ENCODE measurements at regions of chr22 and their contacts with region 1.

Region 1: GRCh38 chr22:32474635-32475467 is at the start of gene FBXO7:
- DNase-seq: peak; percentile 96
- H3K4me3 ChIP-seq: peak within 1 kb of the TSS; percentile 66 to 99 (median 94)
- H3K27ac ChIP-seq: peak within 1 kb of the TSS; percentile 88 to 100 (median 100)
- H3K4me1 ChIP-seq: peaks cover 0 to 41% (median 27%) of the 10 kb centered on the region in 4 donors
- H3K27me3 ChIP-seq: no peaks in the 10 kb centered on the region
- CTCF ChIP-seq: peak in 1 of 4 experiments; percentile 16
- EP300 ChIP-seq: peak in 1 of 4 donors; percentile 44
- POLR2A ChIP-seq: peak; percentile 48 to 72
- total RNA-seq, gene FBXO7: 69.0 to 83.6 (median 81.9) TPM

Region 2: DNA sequence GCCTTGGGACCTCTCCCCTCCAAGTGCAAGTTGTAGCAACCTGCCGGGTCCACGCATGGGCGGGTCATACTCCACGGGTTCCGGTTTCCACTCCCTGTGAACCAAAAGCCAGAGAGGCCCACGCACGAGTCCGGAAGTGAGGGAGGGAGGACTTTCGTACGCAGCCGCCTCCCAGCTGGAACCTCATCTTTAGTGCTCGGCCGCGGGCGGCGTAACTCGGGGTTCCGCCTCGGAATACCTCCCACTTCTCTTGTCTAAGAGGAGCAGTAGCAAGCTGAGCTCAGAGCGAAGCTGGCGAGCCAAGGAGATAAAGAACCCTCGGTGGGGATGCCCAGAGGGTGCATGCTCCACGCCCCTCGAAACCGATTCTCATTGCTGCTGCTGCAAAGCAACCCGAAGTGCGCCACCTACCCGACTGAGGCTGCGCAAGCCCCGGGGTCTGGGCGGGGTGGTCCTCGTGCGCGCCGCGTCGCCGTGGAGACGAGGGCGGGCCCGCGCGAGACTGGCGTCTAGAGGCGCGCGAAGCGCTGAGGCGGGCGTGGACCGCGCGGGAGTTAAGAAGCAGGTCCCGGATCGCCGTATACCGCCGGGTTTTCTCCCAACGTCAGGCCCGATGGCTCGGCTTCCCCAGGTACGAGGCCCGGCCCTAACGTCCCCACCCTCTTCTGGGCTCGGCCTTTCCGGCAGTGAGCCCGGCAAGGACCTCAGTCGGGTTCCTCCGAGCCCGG is 978.7 kb before region 1 on chr22 and contains the start of gene SFI1:
- intact Hi-C with region 1: loop called (anchors 10 kb)
- DNase-seq: peak; percentile 95
- H3K4me3 ChIP-seq: peak within 1 kb of the TSS; percentile 56 to 83 (median 70)
- H3K27ac ChIP-seq: peak within 1 kb of the TSS; percentile 84 to 93 (median 84)
- H3K4me1 ChIP-seq: peaks cover 0 to 19% (median 8%) of the 10 kb centered on the region in 4 donors
- H3K27me3 ChIP-seq: no peaks in the 10 kb centered on the region
- CTCF ChIP-seq: no peak
- EP300 ChIP-seq: peak in 1 of 4 donors; percentile 11
- POLR2A ChIP-seq: peak in 1 of 2 donors; percentile 16
- total RNA-seq, gene SFI1: 15.3 to 38.0 (median 27.7) TPM

Region 3: DNA sequence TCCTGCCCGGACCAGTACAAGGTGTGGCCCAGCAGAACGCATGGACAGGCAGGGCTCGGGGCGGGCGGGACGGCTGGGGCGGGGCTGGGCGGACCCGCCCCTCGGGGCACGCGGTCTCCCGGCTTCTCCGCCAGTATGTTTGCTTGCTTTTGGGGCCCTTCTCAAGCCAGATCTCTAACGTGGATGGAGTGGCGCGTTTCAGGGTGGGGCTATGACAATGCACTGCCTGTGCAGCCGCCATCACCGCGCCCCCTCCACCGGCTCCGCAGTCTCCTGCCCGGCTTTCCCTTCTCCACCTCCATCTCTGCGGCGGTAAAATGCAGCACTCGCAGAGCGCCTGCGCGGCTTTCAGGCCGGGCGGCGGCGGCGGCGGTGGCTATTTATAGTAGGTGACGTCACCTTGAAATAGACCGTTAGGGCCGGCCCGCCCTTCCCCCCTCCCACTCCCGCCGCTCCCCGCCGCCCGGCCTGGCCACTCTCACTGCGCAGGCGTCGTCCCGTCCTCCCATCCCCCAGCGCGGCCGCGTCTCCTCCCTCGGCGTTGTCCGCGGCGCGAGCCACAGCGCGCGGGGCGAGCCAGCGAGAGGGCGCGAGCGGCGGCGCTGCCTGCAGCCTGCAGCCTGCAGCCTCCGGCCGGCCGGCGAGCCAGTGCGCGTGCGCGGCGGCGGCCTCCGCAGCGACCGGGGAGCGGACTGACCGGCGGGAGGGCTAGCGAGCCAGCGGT is 530.7 kb before region 1 on chr22 and contains the start of gene YWHAH:
- intact Hi-C with region 1: loop called (anchors 10 kb)
- DNase-seq: peak; percentile 98
- H3K4me3 ChIP-seq: peak within 1 kb of the TSS; percentile 81 to 96 (median 87)
- H3K27ac ChIP-seq: peak within 1 kb of the TSS; percentile 95 to 100 (median 98)
- H3K4me1 ChIP-seq: peaks cover 0 to 37% (median 24%) of the 10 kb centered on the region in 4 donors
- H3K27me3 ChIP-seq: no peaks in the 10 kb centered on the region
- CTCF ChIP-seq: no peak
- EP300 ChIP-seq: no peak
- POLR2A ChIP-seq: no peak
- total RNA-seq, gene YWHAH: 91.8 to 114 (median 101) TPM

Region 4: DNA sequence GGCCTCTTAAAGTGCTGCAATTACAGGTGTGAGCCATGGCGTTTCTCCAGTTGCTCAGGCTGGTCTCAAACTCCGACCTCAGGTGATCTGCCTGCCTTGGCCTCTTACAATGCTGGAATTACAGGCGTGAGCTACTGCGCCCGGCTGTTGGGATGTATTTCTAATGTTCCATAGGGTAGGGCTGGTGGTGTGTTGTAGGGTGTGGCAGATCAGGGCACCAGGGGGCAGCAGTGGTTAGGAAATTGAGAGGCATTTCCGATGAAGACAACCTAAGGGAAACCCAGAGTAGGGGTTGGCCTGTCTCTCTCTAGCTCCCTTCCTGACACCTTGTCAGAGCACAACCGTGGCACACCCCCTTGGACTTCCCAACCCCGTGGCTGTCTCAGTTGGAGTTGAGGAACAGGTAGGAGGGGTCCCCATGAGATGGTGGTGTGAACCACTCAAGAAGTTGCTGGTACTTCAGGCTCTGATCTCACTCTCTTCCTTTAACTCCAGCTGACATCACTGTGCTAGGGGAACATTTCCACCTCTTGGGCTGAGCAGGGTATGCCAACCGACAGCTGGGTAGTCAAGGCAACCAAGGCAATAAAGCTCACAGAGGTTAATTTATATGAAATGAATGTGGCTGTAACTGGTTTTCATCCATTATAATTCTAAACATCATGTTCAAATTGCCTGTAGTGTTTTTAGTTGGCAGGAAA is 497.6 kb before region 1 on chr22:
- intact Hi-C with region 1: loop called (anchors 5 kb)
- DNase-seq: peak; percentile 75
- H3K4me3 ChIP-seq: no peak overlapping the region
- H3K27ac ChIP-seq: no peak overlapping the region
- H3K4me1 ChIP-seq: no peaks in the 10 kb centered on the region
- H3K27me3 ChIP-seq: no peaks in the 10 kb centered on the region
- CTCF ChIP-seq: peak; percentile 19 to 69 (median 64)
- EP300 ChIP-seq: no peak
- POLR2A ChIP-seq: no peak

Region 5: DNA sequence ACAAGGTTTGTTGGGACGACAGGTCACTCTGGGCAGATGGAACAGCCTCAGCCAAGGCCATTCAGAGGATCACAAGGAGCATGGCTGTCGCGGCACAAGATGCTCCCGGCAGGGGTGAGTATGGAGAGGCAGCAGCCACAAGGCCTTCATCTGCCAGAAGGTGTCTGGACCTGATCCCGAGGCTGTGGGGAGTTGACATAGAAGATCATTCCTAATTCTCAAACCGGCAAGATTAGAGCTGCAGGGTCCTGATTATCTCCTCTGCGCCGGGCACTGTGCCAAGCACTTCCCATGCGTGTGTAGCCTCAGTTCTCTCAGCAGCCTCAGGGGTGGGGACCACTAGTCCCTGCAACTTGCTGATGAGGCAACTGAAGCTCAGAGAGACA is 149.4 kb before region 1 on chr22:
- intact Hi-C with region 1: no loop called
- DNase-seq: no peak
- H3K4me3 ChIP-seq: no peak overlapping the region
- H3K27ac ChIP-seq: no peak overlapping the region
- H3K4me1 ChIP-seq: no peaks in the 10 kb centered on the region
- H3K27me3 ChIP-seq: no peaks in the 10 kb centered on the region
- CTCF ChIP-seq: no peak
- EP300 ChIP-seq: no peak
- POLR2A ChIP-seq: no peak

Region 6: DNA sequence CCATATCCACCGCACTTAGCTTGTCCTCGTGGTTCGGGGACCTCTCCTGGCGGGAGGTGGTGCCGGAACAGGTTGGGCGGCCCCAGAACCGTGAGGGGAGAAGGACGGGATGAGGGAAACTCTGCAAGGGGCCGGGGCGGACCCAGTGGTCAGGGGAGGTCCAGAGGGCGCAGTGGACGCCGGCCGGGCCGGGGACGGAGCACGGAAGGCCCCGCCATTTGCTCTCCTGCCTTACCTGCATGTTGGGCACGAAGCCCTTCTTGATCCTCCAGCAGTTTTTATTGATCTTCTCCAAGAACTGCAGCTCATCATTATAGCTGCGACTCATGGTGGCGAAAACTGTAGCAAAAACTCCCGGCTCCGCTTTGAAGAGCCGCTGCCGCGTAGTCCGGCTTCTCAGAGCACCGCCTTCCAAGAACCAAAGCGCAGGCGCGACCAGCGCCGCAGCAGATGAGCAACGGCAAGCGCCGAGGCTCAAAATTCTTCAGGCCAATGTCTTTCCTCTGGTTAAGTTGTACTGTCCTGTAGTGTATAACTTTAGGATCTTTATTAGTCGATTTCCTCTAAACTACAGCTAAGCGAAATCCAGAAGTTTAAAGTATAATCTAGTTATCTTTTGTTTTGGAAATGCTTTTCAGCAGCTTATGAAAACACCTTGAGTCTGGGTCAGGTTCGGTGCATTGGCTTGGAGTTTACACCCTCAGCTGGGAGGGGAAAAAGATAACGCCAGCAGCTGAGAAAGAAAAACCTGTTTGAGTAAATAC is 62.8 kb before region 1 on chr22 and contains the start of gene RTCB:
- intact Hi-C with region 1: loop called (anchors 2 kb)
- DNase-seq: peak; percentile 93
- H3K4me3 ChIP-seq: peak within 1 kb of the TSS; percentile 83 to 96 (median 87)
- H3K27ac ChIP-seq: peak within 1 kb of the TSS; percentile 67 to 79 (median 78)
- H3K4me1 ChIP-seq: peaks cover 0 to 34% (median 23%) of the 10 kb centered on the region in 4 donors
- H3K27me3 ChIP-seq: no peaks in the 10 kb centered on the region
- CTCF ChIP-seq: no peak
- EP300 ChIP-seq: peak in 1 of 4 donors; percentile 13
- POLR2A ChIP-seq: peak; percentile 62 to 65
- total RNA-seq, gene RTCB: 46.8 to 66.4 (median 61.8) TPM

Measured in sigmoid colon (tissue), 7 donors.